ENCODE measurements at regions of chr10 and their contacts with region 1.

Region 1: GRCh38 chr10:69506834-69507721 is 55.8 kb downstream of the TSPAN15 start:
- DNase-seq: peak in 2 of 9 donors; percentile 5
- ATAC-seq: peak; percentile 11
- H3K4me3 ChIP-seq: peak overlapping the region; percentile 43
- H3K4me3 Mint-ChIP-seq: peak overlapping the region; percentile 63 to 80 (median 74)
- H3K27ac ChIP-seq: no peak overlapping the region
- H3K27ac Mint-ChIP-seq: peak overlapping the region; percentile 58 to 93 (median 86)
- H3K4me1 ChIP-seq: peaks cover 7 to 8% of the 10 kb centered on the region in 2 donors
- H3K4me1 Mint-ChIP-seq: peaks cover 9 to 16% (median 10%) of the 10 kb centered on the region in 7 donors
- H3K27me3 ChIP-seq: no peaks in the 10 kb centered on the region
- H3K27me3 Mint-ChIP-seq: peaks cover 0 to 29% (median 0%) of the 10 kb centered on the region in 5 donors

Region 2: DNA sequence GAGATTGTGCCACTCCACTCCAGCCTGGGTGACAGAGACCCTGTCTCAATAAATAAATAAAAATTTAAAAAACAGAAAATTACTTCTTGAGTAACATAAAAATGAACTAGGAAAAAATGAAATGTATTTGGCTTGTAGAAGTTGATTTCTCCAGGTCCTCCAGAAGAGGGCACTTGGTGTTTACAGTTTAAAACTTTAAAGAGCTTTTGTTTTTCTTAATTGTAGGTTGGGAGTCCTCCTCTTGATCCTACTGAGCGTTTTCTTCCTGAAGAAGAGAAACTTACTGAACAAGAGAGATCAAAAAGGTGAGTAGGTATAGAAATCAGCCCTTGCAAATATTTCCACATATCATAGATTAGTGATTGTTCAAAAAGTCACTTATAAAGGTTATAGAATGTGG is 502.3 kb before region 1 on chr10:
- CTCF ChIA-PET with region 1: no interaction called
- POLR2A ChIA-PET with region 1: no interaction called
- intact Hi-C with region 1: loop called in 1 of 2 experiments (anchors 2 kb)
- DNase-seq: peak in 7 of 9 donors; percentile 42 to 72 (median 60)
- ATAC-seq: peak; percentile 74
- H3K4me3 ChIP-seq: no peak overlapping the region
- H3K4me3 Mint-ChIP-seq: no peak overlapping the region
- H3K27ac ChIP-seq: no peak overlapping the region
- H3K27ac Mint-ChIP-seq: peak overlapping the region in 4 of 9 donors; percentile 23 to 43 (median 28)
- H3K4me1 ChIP-seq: peaks cover 0 to 3% of the 10 kb centered on the region in 2 donors
- H3K4me1 Mint-ChIP-seq: peaks cover 0 to 11% (median 5%) of the 10 kb centered on the region in 7 donors
- H3K27me3 ChIP-seq: no peaks in the 10 kb centered on the region
- H3K27me3 Mint-ChIP-seq: no peaks in the 10 kb centered on the region

Region 3: DNA sequence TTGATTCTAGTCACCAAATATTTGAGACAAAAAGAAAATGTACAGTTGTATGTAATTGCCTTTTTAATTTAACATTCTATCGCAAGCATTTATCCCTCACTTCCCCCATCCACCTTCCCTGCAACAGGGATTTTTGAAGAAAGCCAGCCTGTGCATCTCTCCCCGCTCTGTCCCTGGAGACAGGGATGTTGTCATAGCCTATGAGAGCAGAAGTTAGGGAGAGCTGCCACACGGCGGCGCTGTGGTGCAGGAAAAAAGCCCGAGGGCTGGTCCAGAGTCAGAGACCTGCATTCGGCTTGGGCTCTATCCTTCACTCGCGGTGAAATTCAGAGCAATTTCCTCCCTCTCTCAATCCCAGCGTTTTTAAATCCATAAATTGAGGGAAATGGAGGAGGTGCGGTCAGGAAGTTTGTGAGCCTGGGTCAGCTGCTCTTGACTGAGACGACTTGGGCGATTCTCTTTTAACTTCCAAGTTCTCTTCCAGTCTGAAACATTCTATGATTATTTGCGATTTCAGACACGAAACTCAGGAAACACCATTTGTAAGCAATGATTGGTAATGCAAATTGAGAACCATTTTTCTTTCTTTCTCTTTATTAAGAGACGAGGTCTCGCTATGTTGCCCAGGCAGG is 269.4 kb before region 1 on chr10:
- CTCF ChIA-PET with region 1: no interaction called
- POLR2A ChIA-PET with region 1: interaction called, 4 read pairs
- intact Hi-C with region 1: loop called (anchors 1 kb)
- DNase-seq: peak; percentile 67 to 88 (median 79)
- ATAC-seq: peak; percentile 93
- H3K4me3 ChIP-seq: no peak overlapping the region
- H3K4me3 Mint-ChIP-seq: peak overlapping the region in 4 of 10 donors; percentile 9 to 36 (median 10)
- H3K27ac ChIP-seq: no peak overlapping the region
- H3K27ac Mint-ChIP-seq: peak overlapping the region in 6 of 9 donors; percentile 2 to 78 (median 20)
- H3K4me1 ChIP-seq: peaks cover 4 to 6% of the 10 kb centered on the region in 2 donors
- H3K4me1 Mint-ChIP-seq: peaks cover 8 to 37% (median 23%) of the 10 kb centered on the region in 7 donors
- H3K27me3 ChIP-seq: no peaks in the 10 kb centered on the region
- H3K27me3 Mint-ChIP-seq: no peaks in the 10 kb centered on the region

Region 4: DNA sequence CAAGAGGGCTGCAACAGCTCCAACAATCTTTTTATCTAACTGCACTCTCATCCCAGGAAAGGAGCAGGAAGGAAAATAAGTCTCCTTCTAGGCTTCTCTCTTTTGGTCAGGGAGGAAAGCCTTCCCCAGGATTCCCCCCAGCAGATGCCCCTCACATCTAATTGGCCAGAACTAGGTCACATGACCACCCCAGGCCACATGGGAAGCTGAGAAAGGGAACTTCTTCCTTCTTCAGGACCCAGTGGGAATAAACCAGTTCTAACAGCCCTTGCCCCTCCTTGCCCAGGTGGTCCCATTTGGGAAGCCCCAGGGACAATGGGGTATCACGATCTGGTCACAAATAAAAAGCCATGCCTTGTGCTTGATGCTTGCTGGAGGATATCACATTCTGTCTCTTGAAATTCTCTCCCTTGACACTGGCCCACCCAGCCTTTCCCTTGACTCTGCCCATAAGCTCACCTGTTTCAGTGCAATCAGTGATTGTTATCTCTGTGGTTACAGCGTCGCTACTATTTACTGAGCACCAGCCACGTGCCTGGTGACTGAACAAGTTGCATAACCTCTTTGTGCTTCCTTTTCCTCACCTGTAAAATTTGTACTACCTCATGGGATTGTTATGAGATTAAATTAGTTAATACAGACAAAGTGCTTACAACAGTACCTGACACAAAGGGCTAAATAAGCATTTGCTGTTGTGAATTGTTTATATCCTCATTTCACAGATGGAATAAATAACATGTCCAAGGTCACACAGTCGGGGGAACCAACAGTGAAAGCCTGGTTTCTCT is 81.4 kb before region 1 on chr10:
- CTCF ChIA-PET with region 1: interaction called, 5 read pairs
- POLR2A ChIA-PET with region 1: no interaction called
- intact Hi-C with region 1: loop called (anchors 1 kb)
- DNase-seq: peak in 7 of 9 donors; percentile 60 to 82 (median 74)
- ATAC-seq: peak; percentile 90
- H3K4me3 ChIP-seq: peak overlapping the region; percentile 22
- H3K4me3 Mint-ChIP-seq: peak overlapping the region; percentile 4 to 64 (median 36)
- H3K27ac ChIP-seq: peak overlapping the region; percentile 54
- H3K27ac Mint-ChIP-seq: peak overlapping the region; percentile 45 to 92 (median 88)
- H3K4me1 ChIP-seq: peaks cover 29 to 46% of the 10 kb centered on the region in 2 donors
- H3K4me1 Mint-ChIP-seq: peaks cover 40 to 66% (median 55%) of the 10 kb centered on the region in 7 donors
- H3K27me3 ChIP-seq: no peaks in the 10 kb centered on the region
- H3K27me3 Mint-ChIP-seq: peaks cover 0 to 7% (median 0%) of the 10 kb centered on the region in 5 donors